Cardiac septum (tissue), 1 donor: ENCODE measurements at regions of chr11 and their contacts with region 1.

Region 1: GRCh38 chr11:57530596-57531507 is at the start of gene TIMM10:
- DNase-seq: peak; percentile 98
- total RNA-seq, gene TIMM10: 71.6 TPM

Region 2: GRCh38 chr11:57335343-57336110 is 195.3 kb before region 1 on chr11 and contains the start of gene SSRP1:
- intact Hi-C with region 1: loop called (anchors 5 kb)
- DNase-seq: peak; percentile 95
- total RNA-seq, gene SSRP1: 35.4 TPM

Region 3: DNA sequence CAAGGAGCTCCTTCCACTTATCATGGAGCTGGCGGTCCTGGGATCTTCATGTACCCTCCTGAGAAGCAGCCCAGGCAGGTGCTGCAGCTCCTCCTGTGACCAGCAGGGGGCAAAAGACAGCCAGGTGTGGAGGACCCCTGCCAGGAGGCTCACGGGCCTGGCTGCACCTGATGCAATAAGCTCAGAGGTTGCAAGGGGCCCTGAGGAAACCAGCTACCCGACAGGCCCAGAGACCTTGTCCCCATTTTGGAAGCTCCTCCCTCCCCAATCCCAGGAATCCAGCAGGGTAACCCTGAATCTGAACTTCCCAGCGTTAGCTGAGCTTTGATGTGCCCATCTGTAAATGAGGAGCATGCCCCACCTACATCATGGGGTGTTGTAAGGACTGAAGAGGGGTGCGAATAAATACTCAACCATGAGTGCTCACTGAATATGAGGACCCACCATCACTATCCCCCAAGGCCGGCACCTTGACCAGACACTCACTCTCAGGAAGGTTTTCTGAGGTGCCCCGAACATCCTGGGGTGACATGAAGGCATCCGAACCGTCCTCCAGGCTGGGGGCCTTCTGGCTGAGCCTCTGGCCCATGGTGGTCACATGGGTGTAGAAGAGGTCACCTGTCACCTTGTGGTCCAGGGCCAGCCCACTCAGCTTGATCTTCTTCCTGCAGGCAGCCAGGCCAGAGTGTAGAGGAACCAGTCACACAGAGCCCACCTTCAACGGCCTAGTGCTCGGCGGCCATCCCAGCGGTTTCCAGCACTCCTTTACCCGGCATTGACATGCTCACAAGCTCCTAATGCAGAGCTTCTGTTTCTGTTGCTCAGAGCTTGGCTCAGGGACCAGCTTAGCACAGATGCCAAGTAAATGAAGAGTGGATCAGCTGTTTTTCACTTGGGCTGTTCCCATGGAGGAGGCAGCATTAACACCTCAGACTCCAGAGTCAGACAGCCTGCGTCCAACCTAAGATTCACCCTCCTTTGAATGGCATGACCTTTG is 37.0 kb before region 1 on chr11:
- intact Hi-C with region 1: loop called (anchors 1 kb)
- DNase-seq: no peak

Region 4: GRCh38 chr11:57508341-57509170 is 22.3 kb before region 1 on chr11:
- intact Hi-C with region 1: no loop called
- DNase-seq: no peak

Region 5: DNA sequence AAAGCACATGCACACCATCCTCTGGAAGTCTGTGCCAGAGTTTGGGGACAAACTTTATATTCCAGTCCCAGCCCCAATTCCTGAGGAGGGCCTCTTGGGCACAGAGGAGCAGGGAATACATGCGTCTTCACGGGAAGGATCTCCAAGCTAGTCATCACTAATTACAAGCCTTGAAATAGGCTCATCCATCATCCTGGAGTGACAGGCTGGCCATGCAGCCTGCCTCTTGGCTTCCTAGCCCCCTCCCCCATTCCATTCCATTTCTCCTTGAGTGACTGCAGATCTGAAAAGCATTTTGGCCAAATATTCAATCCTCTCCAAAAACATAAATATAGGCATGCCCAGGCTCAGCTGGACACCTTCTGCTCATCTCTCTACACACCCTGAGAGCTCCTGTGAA is 91.4 kb after region 1 on chr11:
- intact Hi-C with region 1: no loop called
- DNase-seq: peak; percentile 9

Region 6: DNA sequence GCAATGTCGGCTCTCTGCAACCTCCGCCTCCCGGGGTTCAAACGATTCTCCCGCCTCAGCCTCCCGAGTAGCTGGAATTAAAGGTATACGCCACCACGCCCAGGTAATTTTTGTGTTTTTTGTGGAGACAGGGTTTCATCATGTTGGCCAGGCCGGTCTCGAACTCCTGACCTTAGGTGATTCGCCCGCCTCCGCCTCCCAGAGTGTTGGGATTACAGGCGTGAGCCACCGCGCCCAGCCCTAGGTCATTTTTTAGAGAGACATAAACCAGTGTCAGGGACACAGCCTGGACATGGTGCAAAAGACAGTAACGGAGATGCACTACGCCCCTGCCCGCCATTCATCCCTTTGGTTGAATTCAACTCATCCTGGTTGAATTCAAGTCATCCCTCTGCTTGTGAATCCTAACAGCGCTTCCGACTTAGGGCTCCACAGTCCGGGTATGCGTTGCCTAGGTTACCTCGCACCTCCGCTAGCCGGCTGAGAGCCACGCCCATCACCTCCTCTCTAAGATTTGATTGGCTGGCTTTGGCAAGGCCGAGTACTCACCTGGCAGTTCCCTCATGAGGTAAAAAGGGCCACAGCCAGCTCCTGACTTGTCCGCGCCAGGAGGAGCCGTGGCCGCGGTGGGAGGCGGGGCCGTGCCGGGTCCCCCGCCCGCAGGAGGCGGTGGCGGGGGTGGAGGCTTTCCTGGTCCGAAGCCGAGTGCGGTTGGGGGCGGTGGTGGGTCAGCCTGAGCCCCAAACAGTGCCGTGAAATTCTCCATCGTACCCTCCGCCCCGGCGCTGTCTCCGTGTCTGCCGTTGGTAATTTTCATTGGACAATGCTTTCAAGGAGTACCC is 180.8 kb after region 1 on chr11 and contains the start of gene MED19:
- intact Hi-C with region 1: no loop called
- DNase-seq: no peak
- total RNA-seq, gene MED19: 9.9 TPM